ENCODE measurements at regions of chr5 and their contacts with region 1.

Region 1: DNA sequence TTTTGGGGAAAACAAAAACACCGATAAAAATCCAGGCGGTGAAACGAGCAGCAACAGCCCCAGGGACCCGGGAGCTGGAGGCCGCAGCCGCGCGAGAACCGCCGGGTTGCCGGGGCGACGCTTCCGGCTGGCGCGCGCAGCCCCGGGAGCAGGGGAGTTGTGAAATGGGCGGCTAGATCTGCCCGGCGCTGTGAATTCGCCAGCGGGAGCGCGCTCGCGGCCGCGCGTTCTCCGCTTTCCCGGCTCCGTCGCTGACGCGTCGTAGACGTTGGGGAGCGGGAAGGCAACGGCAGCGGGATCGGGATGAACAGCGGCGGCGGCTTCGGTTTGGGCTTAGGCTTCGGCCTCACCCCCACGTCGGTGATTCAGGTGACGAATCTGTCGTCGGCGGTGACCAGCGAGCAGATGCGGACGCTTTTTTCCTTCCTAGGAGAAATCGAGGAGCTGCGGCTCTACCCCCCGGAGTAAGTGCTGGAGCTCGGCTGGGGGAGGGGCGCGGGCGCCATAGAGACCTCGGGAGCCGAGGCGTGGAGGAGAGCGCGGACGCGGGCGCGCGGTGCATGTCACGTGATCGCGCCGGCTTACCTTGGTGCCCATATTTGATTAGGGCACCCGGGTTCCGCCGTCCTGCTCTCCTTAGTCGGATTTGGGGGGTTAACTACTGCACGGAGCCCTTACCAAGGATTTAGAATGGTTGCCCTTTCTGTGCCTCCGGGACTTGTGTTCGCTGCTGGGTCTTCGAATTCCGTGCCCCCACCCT is at the start of gene SREK1:
- DNase-seq: peak; percentile 91
- H3K4me3 Mint-ChIP-seq: peak within 1 kb of the TSS; percentile 85
- H3K27ac Mint-ChIP-seq: peak within 1 kb of the TSS; percentile 100
- H3K4me1 Mint-ChIP-seq: peaks cover 8% of the 10 kb centered on the region
- H3K27me3 Mint-ChIP-seq: no peaks in the 10 kb centered on the region
- CTCF ChIP-seq: no peak
- total RNA-seq, gene SREK1: 87.3 and 102 TPM in 2 replicates

Region 2: GRCh38 chr5:65624571-65625555 is 519.4 kb before region 1 on chr5 and contains the starts of genes SHLD3 and TRAPPC13:
- CTCF ChIA-PET with region 1: no interaction called
- POLR2A ChIA-PET with region 1: interaction called, 6 read pairs
- intact Hi-C with region 1: loop called (anchors 2 kb)
- DNase-seq: peak; percentile 89
- H3K4me3 Mint-ChIP-seq: peak within 1 kb of the TSS; percentile 85
- H3K27ac Mint-ChIP-seq: peak within 1 kb of the TSS; percentile 97
- H3K4me1 Mint-ChIP-seq: peaks cover 7% of the 10 kb centered on the region
- H3K27me3 Mint-ChIP-seq: no peaks in the 10 kb centered on the region
- CTCF ChIP-seq: no peak
- total RNA-seq, gene SHLD3: 3.0 and 3.7 TPM in 2 replicates
- total RNA-seq, gene TRAPPC13: 28.4 and 39.9 TPM in 2 replicates

Region 3: DNA sequence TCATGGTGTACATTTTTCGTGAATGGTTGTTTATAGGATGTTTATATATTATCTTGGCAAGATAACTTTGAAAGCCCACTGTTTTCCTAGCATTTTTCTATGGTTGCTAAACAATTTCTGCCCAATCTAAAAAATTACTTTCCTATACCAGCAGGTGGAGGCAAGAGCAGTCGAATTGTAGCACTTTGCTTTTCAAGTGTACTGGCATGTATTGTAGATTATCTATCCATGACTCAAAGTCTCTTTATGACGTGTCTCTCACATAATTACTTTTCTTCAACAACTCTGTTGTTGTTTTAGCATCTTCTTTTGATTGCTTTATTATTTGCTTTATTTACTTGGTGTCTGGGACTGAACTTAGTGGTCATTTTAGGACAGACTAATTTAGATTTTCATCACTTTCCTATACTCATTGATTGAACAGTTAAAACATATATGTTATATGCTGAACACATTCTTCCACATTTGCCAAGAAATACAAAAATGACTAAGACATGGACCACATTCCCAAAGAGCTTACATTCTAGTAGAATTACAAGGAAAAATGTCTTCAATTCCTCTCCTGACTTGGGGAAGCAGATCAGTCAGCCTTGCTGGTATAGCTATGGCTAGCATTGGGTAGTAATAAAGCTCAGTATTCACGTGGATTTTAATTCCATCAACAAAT is 401.6 kb before region 1 on chr5:
- CTCF ChIA-PET with region 1: no interaction called
- POLR2A ChIA-PET with region 1: interaction called, 6 read pairs
- intact Hi-C with region 1: loop called (anchors 2 kb)
- DNase-seq: peak; percentile 72
- H3K4me3 Mint-ChIP-seq: no peak overlapping the region
- H3K27ac Mint-ChIP-seq: no peak overlapping the region
- H3K4me1 Mint-ChIP-seq: peaks cover 18% of the 10 kb centered on the region
- H3K27me3 Mint-ChIP-seq: no peaks in the 10 kb centered on the region
- CTCF ChIP-seq: peak; percentile 65

Region 4: GRCh38 chr5:65986050-65986451 is 158.2 kb before region 1 on chr5:
- CTCF ChIA-PET with region 1: no interaction called
- POLR2A ChIA-PET with region 1: no interaction called
- intact Hi-C with region 1: no loop called
- DNase-seq: no peak
- H3K4me3 Mint-ChIP-seq: no peak overlapping the region
- H3K27ac Mint-ChIP-seq: no peak overlapping the region
- H3K4me1 Mint-ChIP-seq: peaks cover 30% of the 10 kb centered on the region
- H3K27me3 Mint-ChIP-seq: no peaks in the 10 kb centered on the region
- CTCF ChIP-seq: no peak

Region 5: GRCh38 chr5:66157046-66157445 is 12.8 kb after region 1 on chr5:
- CTCF ChIA-PET with region 1: interaction called, 3 read pairs
- POLR2A ChIA-PET with region 1: interaction called, 10 read pairs
- intact Hi-C with region 1: no loop called
- DNase-seq: no peak
- H3K4me3 Mint-ChIP-seq: no peak overlapping the region
- H3K27ac Mint-ChIP-seq: no peak overlapping the region
- H3K4me1 Mint-ChIP-seq: peaks cover 20% of the 10 kb centered on the region
- H3K27me3 Mint-ChIP-seq: no peaks in the 10 kb centered on the region
- CTCF ChIP-seq: no peak

Region 6: DNA sequence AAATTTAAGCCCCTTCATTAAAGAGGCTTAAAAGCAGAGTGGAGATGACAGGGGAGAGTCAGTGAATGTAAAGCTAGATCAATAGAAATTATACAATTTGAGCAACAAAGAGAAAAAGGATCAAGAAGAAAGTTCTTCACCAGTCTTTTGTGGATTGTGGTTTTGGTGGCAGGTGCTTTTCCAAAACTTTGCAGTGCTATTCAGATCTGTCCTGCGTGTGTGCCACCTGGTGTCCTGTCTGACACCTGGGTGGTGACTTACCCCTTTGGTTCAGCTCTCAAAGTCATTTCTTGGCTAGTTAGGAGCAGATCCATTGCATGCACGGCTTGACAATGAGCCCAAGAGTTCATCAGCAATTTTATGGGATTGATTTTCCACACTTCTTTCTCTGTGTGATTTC is 69.3 kb after region 1 on chr5:
- CTCF ChIA-PET with region 1: no interaction called
- POLR2A ChIA-PET with region 1: no interaction called
- intact Hi-C with region 1: no loop called
- DNase-seq: no peak
- H3K4me3 Mint-ChIP-seq: no peak overlapping the region
- H3K27ac Mint-ChIP-seq: no peak overlapping the region
- H3K4me1 Mint-ChIP-seq: peaks cover 15% of the 10 kb centered on the region
- H3K27me3 Mint-ChIP-seq: no peaks in the 10 kb centered on the region
- CTCF ChIP-seq: no peak

Measured in MCF 10A (cell line).